ENCODE measurements at regions of chrX and their contacts with region 1.

Region 1: DNA sequence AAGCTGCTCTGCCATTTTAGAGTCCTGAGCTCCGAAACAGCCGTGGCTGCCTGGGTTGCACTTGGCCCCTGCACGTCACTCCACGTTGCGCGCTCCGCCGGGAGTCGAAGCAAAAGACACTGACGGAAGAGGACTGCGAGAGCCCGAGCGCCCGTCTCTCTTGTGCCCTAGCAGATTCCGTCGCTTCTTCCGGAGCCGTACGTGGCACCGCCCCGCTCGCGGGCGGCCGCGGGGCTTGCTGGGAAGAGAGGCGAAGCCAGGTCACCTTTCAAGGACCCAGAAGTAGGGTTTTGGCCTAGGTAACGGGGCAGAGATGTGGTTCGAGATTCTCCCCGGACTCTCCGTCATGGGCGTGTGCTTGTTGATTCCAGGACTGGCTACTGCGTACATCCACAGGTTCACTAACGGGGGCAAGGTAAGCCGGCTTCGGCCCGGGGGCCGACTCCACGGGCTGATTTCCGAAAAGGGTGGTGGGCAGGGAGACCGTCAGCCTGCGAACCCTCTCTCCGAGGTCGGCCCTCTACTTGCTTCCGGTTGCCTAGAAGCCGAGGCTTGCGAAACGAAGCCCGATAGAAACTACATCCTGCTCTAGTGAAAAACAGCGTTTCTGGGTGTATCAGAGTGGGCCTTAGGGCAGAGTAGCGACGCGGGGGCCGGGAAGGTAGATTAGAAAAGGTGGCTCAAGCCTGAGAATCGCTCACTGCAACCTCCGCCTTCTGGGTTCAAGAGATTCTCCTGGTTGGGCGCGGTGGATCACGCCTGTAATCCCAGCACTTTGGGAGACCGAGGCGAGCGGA is at the starts of genes NDUFA1 and RNF113A:
- DNase-seq: peak; percentile 84 to 87
- H3K4me3 ChIP-seq: peak within 1 kb of the TSS in 2 of 3 donors; percentile 45 to 73
- H3K27ac ChIP-seq: peak within 1 kb of the TSS; percentile 77 to 96 (median 87)
- H3K4me1 ChIP-seq: peaks cover 0 to 3% of the 10 kb centered on the region in 2 donors
- H3K27me3 ChIP-seq: no peaks in the 10 kb centered on the region
- CTCF ChIP-seq: no peak
- POLR2A ChIP-seq: peak in 1 of 2 donors; percentile 78
- total RNA-seq, gene NDUFA1: 36.2 to 80.0 (median 66.6) TPM
- total RNA-seq, gene RNF113A: 10.1 to 18.0 (median 14.9) TPM

Region 2: GRCh38 chrX:119791438-119792231 is 80.2 kb before region 1 on chrX and contains the start of gene RPL39:
- intact Hi-C with region 1: loop called (anchors 5 kb)
- DNase-seq: peak; percentile 84 to 86
- H3K4me3 ChIP-seq: peak within 1 kb of the TSS; percentile 58 to 77 (median 75)
- H3K27ac ChIP-seq: peak within 1 kb of the TSS; percentile 81 to 97 (median 94)
- H3K4me1 ChIP-seq: peaks cover 0 to 6% of the 10 kb centered on the region in 2 donors
- H3K27me3 ChIP-seq: no peaks in the 10 kb centered on the region
- CTCF ChIP-seq: no peak
- POLR2A ChIP-seq: peak; percentile 21 to 89
- total RNA-seq, gene RPL39: 609 to 3,222 (median 2,121) TPM

Measured in thyroid gland (tissue), 4 donors.